SK-N-SH (cell line): ENCODE measurements at regions of chr17 and their contacts with region 1.

Region 1: GRCh38 chr17:57833179-57833939 is 16.5 kb downstream of the MRPS23 start:
- DNase-seq: peak; percentile 77
- H3K4me3 ChIP-seq: peak overlapping the region in 1 of 2 experiments; percentile 21; a peak in 2 of 4 replicates
- H3K27ac ChIP-seq: peak overlapping the region in 1 of 2 experiments; percentile 81; a peak in 2 of 4 replicates
- H3K4me1 ChIP-seq: peaks cover 0 to 10% of the 10 kb centered on the region in 2 experiments; a peak in 1 of 4 replicates
- H3K27me3 ChIP-seq: no peaks in the 10 kb centered on the region
- CTCF ChIP-seq: peak; percentile 100
- EP300 ChIP-seq: 0 out of 4 replicates have a peak, but pooled peaks of 1 of the 2 experiments have one; percentile 20
- RAD21 ChIP-seq: peak; percentile 95

Region 2: DNA sequence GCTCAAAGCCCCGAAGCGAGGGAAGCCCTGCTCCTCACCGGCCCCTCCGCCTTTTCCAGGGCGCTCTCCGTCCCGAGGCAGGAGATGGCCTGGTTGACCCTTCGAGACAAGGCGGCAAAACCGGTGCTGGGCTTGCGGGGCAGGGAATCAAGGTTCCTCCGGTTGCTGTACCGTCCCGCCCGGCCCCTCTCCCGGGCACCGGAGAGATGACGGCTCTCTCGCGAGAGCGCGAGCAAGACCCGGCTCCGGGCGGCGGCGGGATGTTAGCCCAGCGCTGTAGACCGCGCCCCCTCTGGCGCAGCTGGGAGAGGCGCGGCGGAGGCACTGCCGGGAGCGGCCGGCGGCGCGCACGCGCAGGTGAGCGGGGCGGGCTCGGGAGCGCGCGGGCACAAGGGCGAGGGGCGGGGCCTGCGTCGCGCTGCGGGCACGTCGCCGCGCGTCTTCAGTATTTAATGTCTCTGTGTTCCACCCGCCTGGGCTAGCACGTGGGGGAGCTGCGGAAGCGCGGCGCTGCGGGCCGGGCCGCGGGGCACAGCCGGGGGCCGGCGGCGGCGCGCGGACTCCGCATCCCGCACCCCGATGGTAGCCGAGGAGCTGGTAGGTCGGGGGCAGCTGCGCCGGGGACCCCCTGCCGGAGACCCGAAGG is 748.4 kb before region 1 on chr17 and contains the start of gene AKAP1:
- CTCF ChIA-PET with region 1: interaction called, 12 read pairs
- POLR2A ChIA-PET with region 1: no interaction called
- DNase-seq: peak; percentile 100
- H3K4me3 ChIP-seq: peak within 1 kb of the TSS; percentile 87 to 97
- H3K27ac ChIP-seq: peak within 1 kb of the TSS; percentile 94 to 98
- H3K4me1 ChIP-seq: peaks cover 0 to 12% of the 10 kb centered on the region in 2 experiments; a peak in 2 of 4 replicates
- H3K27me3 ChIP-seq: no peaks in the 10 kb centered on the region
- CTCF ChIP-seq: no peak
- EP300 ChIP-seq: no peak
- RAD21 ChIP-seq: no peak
- polyA plus RNA-seq, gene AKAP1: 23.7 and 36.3 TPM in 2 replicates

Region 3: GRCh38 chr17:57142925-57143324 is 690.4 kb before region 1 on chr17:
- CTCF ChIA-PET with region 1: interaction called, 12 read pairs
- POLR2A ChIA-PET with region 1: no interaction called
- DNase-seq: no peak
- H3K4me3 ChIP-seq: no peak overlapping the region
- H3K27ac ChIP-seq: no peak overlapping the region
- H3K4me1 ChIP-seq: peaks cover 0 to 4% of the 10 kb centered on the region in 2 experiments; a peak in 1 of 4 replicates
- H3K27me3 ChIP-seq: peaks cover 16% of the 10 kb centered on the region; the same call in 1 of the 2 replicates
- CTCF ChIP-seq: no peak
- EP300 ChIP-seq: no peak
- RAD21 ChIP-seq: no peak

Region 4: GRCh38 chr17:57584050-57584551 is 249.3 kb before region 1 on chr17:
- CTCF ChIA-PET with region 1: interaction called, 13 read pairs
- POLR2A ChIA-PET with region 1: interaction called, 6 read pairs
- DNase-seq: peak; percentile 83
- H3K4me3 ChIP-seq: no peak overlapping the region
- H3K27ac ChIP-seq: peak overlapping the region in 1 of 2 experiments; percentile 100; a peak in 2 of 4 replicates
- H3K4me1 ChIP-seq: peaks cover 13 to 89% of the 10 kb centered on the region in 2 experiments; a peak in 3 of 4 replicates
- H3K27me3 ChIP-seq: no peaks in the 10 kb centered on the region
- CTCF ChIP-seq: no peak
- EP300 ChIP-seq: peak in 1 of 2 experiments; percentile 86; a peak in 1 of 4 replicates
- RAD21 ChIP-seq: peak; percentile 47; the same call in 1 of the 2 replicates

Region 5: GRCh38 chr17:57671667-57672632 is 161.4 kb before region 1 on chr17:
- CTCF ChIA-PET with region 1: interaction called, 34 read pairs
- POLR2A ChIA-PET with region 1: no interaction called
- DNase-seq: peak; percentile 94
- H3K4me3 ChIP-seq: peak overlapping the region in 1 of 2 experiments; percentile 9; a peak in 1 of 4 replicates
- H3K27ac ChIP-seq: peak overlapping the region; percentile 5 to 100; a peak in 3 of 4 replicates
- H3K4me1 ChIP-seq: peaks cover 11 to 74% of the 10 kb centered on the region in 2 experiments; a peak in 3 of 4 replicates
- H3K27me3 ChIP-seq: no peaks in the 10 kb centered on the region
- CTCF ChIP-seq: peak; percentile 100
- EP300 ChIP-seq: peak; percentile 32 to 73; a peak in 3 of 4 replicates
- RAD21 ChIP-seq: peak; percentile 95

Region 6: GRCh38 chr17:57761887-57762286 is 71.5 kb before region 1 on chr17:
- CTCF ChIA-PET with region 1: interaction called, 26 read pairs
- POLR2A ChIA-PET with region 1: no interaction called
- DNase-seq: no peak
- H3K4me3 ChIP-seq: no peak overlapping the region
- H3K27ac ChIP-seq: 0 out of 4 replicates have a peak overlapping the region, but pooled peaks of 1 of the 2 experiments have one; percentile 67
- H3K4me1 ChIP-seq: peaks cover 0 to 39% of the 10 kb centered on the region in 2 experiments; a peak in 2 of 4 replicates
- H3K27me3 ChIP-seq: peaks cover 18% of the 10 kb centered on the region; the same call in 1 of the 2 replicates
- CTCF ChIP-seq: no peak
- EP300 ChIP-seq: no peak
- RAD21 ChIP-seq: no peak

Region 7: GRCh38 chr17:57810721-57811637 is 22.4 kb before region 1 on chr17:
- CTCF ChIA-PET with region 1: interaction called, 187 read pairs
- POLR2A ChIA-PET with region 1: interaction called, 3 read pairs
- DNase-seq: peak; percentile 74
- H3K4me3 ChIP-seq: no peak overlapping the region
- H3K27ac ChIP-seq: peak overlapping the region in 1 of 2 experiments; percentile 89; a peak in 2 of 4 replicates
- H3K4me1 ChIP-seq: peaks cover 0 to 32% of the 10 kb centered on the region in 2 experiments; a peak in 2 of 4 replicates
- H3K27me3 ChIP-seq: no peaks in the 10 kb centered on the region
- CTCF ChIP-seq: no peak
- EP300 ChIP-seq: peak in 1 of 2 experiments; percentile 67; a peak in 1 of 4 replicates
- RAD21 ChIP-seq: no peak

Region 8: GRCh38 chr17:57911834-57912673 is 78.7 kb after region 1 on chr17:
- CTCF ChIA-PET with region 1: no interaction called
- POLR2A ChIA-PET with region 1: no interaction called
- DNase-seq: no peak
- H3K4me3 ChIP-seq: no peak overlapping the region
- H3K27ac ChIP-seq: no peak overlapping the region; a peak in 1 of 4 replicates
- H3K4me1 ChIP-seq: peaks cover 0 to 36% of the 10 kb centered on the region in 2 experiments; a peak in 1 of 4 replicates
- H3K27me3 ChIP-seq: no peaks in the 10 kb centered on the region
- CTCF ChIP-seq: no peak
- EP300 ChIP-seq: no peak
- RAD21 ChIP-seq: no peak

Region 9: GRCh38 chr17:57931488-57932137 is 98.3 kb after region 1 on chr17:
- CTCF ChIA-PET with region 1: no interaction called
- POLR2A ChIA-PET with region 1: no interaction called
- DNase-seq: no peak
- H3K4me3 ChIP-seq: no peak overlapping the region
- H3K27ac ChIP-seq: no peak overlapping the region
- H3K4me1 ChIP-seq: peaks cover 28 to 45% of the 10 kb centered on the region in 2 experiments; a peak in 3 of 4 replicates
- H3K27me3 ChIP-seq: no peaks in the 10 kb centered on the region
- CTCF ChIP-seq: no peak
- EP300 ChIP-seq: no peak
- RAD21 ChIP-seq: no peak

Region 10: GRCh38 chr17:57965521-57966160 is 132.3 kb after region 1 on chr17:
- CTCF ChIA-PET with region 1: no interaction called
- POLR2A ChIA-PET with region 1: no interaction called
- DNase-seq: no peak
- H3K4me3 ChIP-seq: no peak overlapping the region
- H3K27ac ChIP-seq: no peak overlapping the region
- H3K4me1 ChIP-seq: peaks cover 4% of the 10 kb centered on the region in 2 experiments; a peak in 2 of 4 replicates
- H3K27me3 ChIP-seq: no peaks in the 10 kb centered on the region
- CTCF ChIP-seq: no peak
- EP300 ChIP-seq: no peak
- RAD21 ChIP-seq: no peak